Naive thymus-derived CD4-positive, alpha-beta T cell (primary cell): ENCODE measurements at regions of chr3 and their contacts with region 1.

Region 1: DNA sequence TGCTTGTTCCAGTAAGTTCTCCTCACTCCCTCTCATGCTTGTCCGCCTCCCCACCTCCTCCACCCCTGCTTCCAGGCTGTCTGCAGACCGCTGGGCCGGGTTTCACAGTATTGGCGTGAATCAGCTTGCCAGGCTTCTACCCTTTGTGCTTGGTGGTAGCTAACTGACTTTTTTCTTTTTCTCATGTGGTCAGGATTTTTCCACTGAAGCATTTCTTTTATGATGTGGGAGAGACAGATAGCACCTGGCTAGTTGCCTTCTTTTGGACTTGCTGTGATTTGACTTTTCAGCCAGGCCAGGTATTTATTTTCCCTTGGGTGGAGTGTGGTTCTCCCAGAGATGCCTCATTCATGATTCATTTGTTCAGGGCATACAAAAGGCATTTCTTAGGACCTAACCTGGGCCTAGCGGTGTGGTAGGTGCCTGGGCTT is 60.6 kb downstream of the ST6GAL1 start:
- DNase-seq: no peak
- ATAC-seq: no peak
- H3K4me3 ChIP-seq: no peak overlapping the region
- H3K4me3 Mint-ChIP-seq: no peak overlapping the region
- H3K27ac ChIP-seq: no peak overlapping the region
- H3K27ac Mint-ChIP-seq: peak overlapping the region in 4 of 9 donors; percentile 51 to 84 (median 61)
- H3K4me1 ChIP-seq: peaks cover 0 to 15% of the 10 kb centered on the region in 2 donors
- H3K4me1 Mint-ChIP-seq: peaks cover 30 to 71% (median 62%) of the 10 kb centered on the region in 7 donors
- H3K27me3 ChIP-seq: no peaks in the 10 kb centered on the region
- H3K27me3 Mint-ChIP-seq: no peaks in the 10 kb centered on the region

Region 2: GRCh38 chr3:185552358-185552877 is 1438.5 kb before region 1 on chr3 and contains the start of gene LIPH:
- CTCF ChIA-PET with region 1: no interaction called
- POLR2A ChIA-PET with region 1: no interaction called
- intact Hi-C with region 1: no loop called
- DNase-seq: no peak
- ATAC-seq: no peak
- H3K4me3 ChIP-seq: no peak within 1 kb of the TSS
- H3K4me3 Mint-ChIP-seq: peak within 1 kb of the TSS in 1 of 10 donors; percentile 4
- H3K27ac ChIP-seq: no peak within 1 kb of the TSS
- H3K27ac Mint-ChIP-seq: no peak within 1 kb of the TSS
- H3K4me1 ChIP-seq: no peaks in the 10 kb centered on the region
- H3K4me1 Mint-ChIP-seq: peaks cover 0 to 8% (median 0%) of the 10 kb centered on the region in 7 donors
- H3K27me3 ChIP-seq: no peaks in the 10 kb centered on the region
- H3K27me3 Mint-ChIP-seq: no peaks in the 10 kb centered on the region
- total RNA-seq, gene LIPH: not detected

Region 3: GRCh38 chr3:186953011-186953487 is 37.8 kb before region 1 on chr3:
- CTCF ChIA-PET with region 1: no interaction called
- POLR2A ChIA-PET with region 1: no interaction called
- intact Hi-C with region 1: loop called in 1 of 2 experiments (anchors 5 kb)
- DNase-seq: no peak
- ATAC-seq: peak; percentile 70
- H3K4me3 ChIP-seq: no peak overlapping the region
- H3K4me3 Mint-ChIP-seq: peak overlapping the region; percentile 0 to 76 (median 45)
- H3K27ac ChIP-seq: peak overlapping the region; percentile 6
- H3K27ac Mint-ChIP-seq: peak overlapping the region; percentile 18 to 91 (median 63)
- H3K4me1 ChIP-seq: peaks cover 13 to 52% of the 10 kb centered on the region in 2 donors
- H3K4me1 Mint-ChIP-seq: peaks cover 71 to 95% (median 83%) of the 10 kb centered on the region in 7 donors
- H3K27me3 ChIP-seq: no peaks in the 10 kb centered on the region
- H3K27me3 Mint-ChIP-seq: no peaks in the 10 kb centered on the region